ENCODE measurements at regions of chr7 and their contacts with region 1.

Region 1: GRCh38 chr7:104983578-104984539 is 30.1 kb upstream of the KMT2E start:
- DNase-seq: no peak
- H3K4me3 ChIP-seq: peak overlapping the region; percentile 70
- H3K27ac ChIP-seq: peak overlapping the region; percentile 97
- H3K27me3 ChIP-seq: no peaks in the 10 kb centered on the region
- CTCF ChIP-seq: peak; percentile 58

Region 2: DNA sequence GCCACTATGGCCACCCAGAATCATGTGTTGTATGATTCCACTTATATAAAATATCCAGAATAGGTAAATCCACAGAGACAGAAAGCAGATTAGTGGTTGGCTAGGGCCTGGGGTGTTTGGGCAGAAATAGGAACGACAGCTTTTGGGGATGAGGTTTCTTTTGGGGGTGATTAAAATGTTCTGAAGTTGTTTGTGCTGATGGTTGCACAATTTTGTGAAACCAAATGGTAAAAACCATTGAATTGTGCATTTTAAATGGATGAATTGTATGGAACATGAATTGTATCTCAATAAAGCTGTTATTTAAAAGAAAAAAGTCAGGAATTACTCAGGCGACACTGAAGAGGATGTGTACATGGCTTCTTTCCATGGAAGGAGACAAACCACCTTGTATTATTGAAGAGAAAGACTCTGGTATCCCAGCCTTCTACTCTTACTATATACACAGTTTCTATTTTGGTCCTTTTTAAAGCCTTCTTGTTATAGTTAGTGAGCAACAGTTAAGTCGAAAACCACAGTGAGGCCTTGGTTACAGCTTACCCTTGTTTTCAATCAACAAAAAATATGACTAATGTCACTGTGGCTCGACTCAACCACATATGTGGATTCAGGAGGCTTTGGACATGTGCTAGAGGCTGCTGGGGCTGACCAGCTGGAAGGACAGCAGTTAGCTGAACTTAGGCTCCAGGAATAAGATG is 27.0 kb before region 1 on chr7:
- CTCF ChIA-PET with region 1: interaction called, 12 read pairs
- POLR2A ChIA-PET with region 1: interaction called, 3 read pairs
- DNase-seq: peak; percentile 81
- H3K4me3 ChIP-seq: no peak overlapping the region
- H3K27ac ChIP-seq: peak overlapping the region; percentile 74
- H3K27me3 ChIP-seq: no peaks in the 10 kb centered on the region
- CTCF ChIP-seq: no peak

Region 3: GRCh38 chr7:104967595-104967994 is 16.3 kb before region 1 on chr7:
- CTCF ChIA-PET with region 1: interaction called, 27 read pairs
- POLR2A ChIA-PET with region 1: interaction called, 11 read pairs
- DNase-seq: no peak
- H3K4me3 ChIP-seq: no peak overlapping the region
- H3K27ac ChIP-seq: no peak overlapping the region
- H3K27me3 ChIP-seq: no peaks in the 10 kb centered on the region
- CTCF ChIP-seq: no peak

Region 4: GRCh38 chr7:105003275-105003674 is 19.4 kb after region 1 on chr7:
- CTCF ChIA-PET with region 1: interaction called, 41 read pairs
- POLR2A ChIA-PET with region 1: interaction called, 9 read pairs
- DNase-seq: no peak
- H3K4me3 ChIP-seq: no peak overlapping the region
- H3K27ac ChIP-seq: no peak overlapping the region
- H3K27me3 ChIP-seq: no peaks in the 10 kb centered on the region
- CTCF ChIP-seq: no peak

Region 5: GRCh38 chr7:105013221-105013815 is 29.5 kb after region 1 on chr7:
- CTCF ChIA-PET with region 1: interaction called, 41 read pairs
- POLR2A ChIA-PET with region 1: interaction called, 31 read pairs
- DNase-seq: peak; percentile 86
- H3K4me3 ChIP-seq: peak overlapping the region; percentile 97
- H3K27ac ChIP-seq: peak overlapping the region; percentile 100
- H3K27me3 ChIP-seq: no peaks in the 10 kb centered on the region
- CTCF ChIP-seq: peak; percentile 58

Region 6: GRCh38 chr7:105046414-105046813 is 62.6 kb after region 1 on chr7:
- CTCF ChIA-PET with region 1: interaction called, 10 read pairs
- POLR2A ChIA-PET with region 1: no interaction called
- DNase-seq: peak; percentile 6
- H3K4me3 ChIP-seq: no peak overlapping the region
- H3K27ac ChIP-seq: no peak overlapping the region
- H3K27me3 ChIP-seq: no peaks in the 10 kb centered on the region
- CTCF ChIP-seq: no peak

Measured in AG04450 (cell line).